ENCODE measurements at regions of chr6 and their contacts with region 1.

Region 1: DNA sequence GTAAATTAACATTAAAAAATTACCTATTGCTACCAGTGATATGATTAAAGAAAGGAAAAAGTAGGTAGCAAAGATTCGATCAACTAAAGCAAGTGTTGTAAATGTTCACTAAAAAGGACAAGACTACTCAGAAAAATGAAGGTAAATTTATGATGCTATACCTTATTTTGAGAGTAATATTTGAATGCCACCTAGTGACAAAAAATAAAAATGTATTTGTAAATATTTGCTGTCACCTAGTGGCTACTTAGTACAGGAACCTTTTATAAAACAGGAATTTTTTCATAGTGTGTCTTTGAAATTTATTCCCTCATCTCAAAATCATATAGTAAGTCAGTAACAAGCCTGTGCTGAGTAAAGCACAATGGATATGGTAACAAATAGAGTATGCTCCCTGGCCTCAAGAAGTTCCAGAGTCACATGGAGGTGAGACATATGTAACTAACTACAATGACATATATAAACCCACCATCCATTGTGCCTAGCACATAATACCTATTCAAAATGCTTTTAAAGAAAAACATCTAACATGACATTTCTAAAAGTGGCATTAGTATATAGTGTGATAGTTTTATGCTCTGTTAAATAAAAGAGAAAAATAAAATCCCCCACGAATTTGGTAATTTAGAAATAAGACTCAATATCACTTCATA is 193.1 kb upstream of the SIM1 start:
- DNase-seq: peak; percentile 4
- ATAC-seq: no peak
- H3K4me3 ChIP-seq: no peak overlapping the region
- H3K4me3 Mint-ChIP-seq: no peak overlapping the region
- H3K27ac ChIP-seq: no peak overlapping the region
- H3K27ac Mint-ChIP-seq: no peak overlapping the region
- H3K4me1 ChIP-seq: no peaks in the 10 kb centered on the region
- H3K4me1 Mint-ChIP-seq: no peaks in the 10 kb centered on the region
- H3K27me3 ChIP-seq: no peaks in the 10 kb centered on the region
- H3K27me3 Mint-ChIP-seq: no peaks in the 10 kb centered on the region
- CTCF ChIP-seq: peak; percentile 39

Region 2: GRCh38 chr6:100116411-100117194 is 541.2 kb before region 1 on chr6:
- CTCF ChIA-PET with region 1: interaction called, 6 read pairs
- POLR2A ChIA-PET with region 1: no interaction called
- intact Hi-C with region 1: loop called (anchors 2 kb)
- DNase-seq: peak; percentile 31
- ATAC-seq: no peak
- H3K4me3 ChIP-seq: no peak overlapping the region
- H3K4me3 Mint-ChIP-seq: no peak overlapping the region
- H3K27ac ChIP-seq: no peak overlapping the region
- H3K27ac Mint-ChIP-seq: no peak overlapping the region
- H3K4me1 ChIP-seq: no peaks in the 10 kb centered on the region
- H3K4me1 Mint-ChIP-seq: no peaks in the 10 kb centered on the region
- H3K27me3 ChIP-seq: no peaks in the 10 kb centered on the region
- H3K27me3 Mint-ChIP-seq: peaks cover 6% of the 10 kb centered on the region
- CTCF ChIP-seq: peak; percentile 63

Region 3: GRCh38 chr6:100633096-100633777 is 24.6 kb before region 1 on chr6:
- CTCF ChIA-PET with region 1: no interaction called
- POLR2A ChIA-PET with region 1: no interaction called
- intact Hi-C with region 1: no loop called
- DNase-seq: no peak
- ATAC-seq: no peak
- H3K4me3 ChIP-seq: no peak overlapping the region
- H3K4me3 Mint-ChIP-seq: no peak overlapping the region
- H3K27ac ChIP-seq: no peak overlapping the region
- H3K27ac Mint-ChIP-seq: no peak overlapping the region
- H3K4me1 ChIP-seq: no peaks in the 10 kb centered on the region
- H3K4me1 Mint-ChIP-seq: no peaks in the 10 kb centered on the region
- H3K27me3 ChIP-seq: no peaks in the 10 kb centered on the region
- H3K27me3 Mint-ChIP-seq: no peaks in the 10 kb centered on the region
- CTCF ChIP-seq: no peak